Naive thymus-derived CD8-positive, alpha-beta T cell (primary cell): ENCODE measurements at regions of chr3 and their contacts with region 1.

Region 1: GRCh38 chr3:48446425-48447193 is at the start of gene ATRIP:
- DNase-seq: peak; percentile 78 to 91 (median 82)
- ATAC-seq: peak; percentile 95 to 98
- H3K4me3 Mint-ChIP-seq: peak within 1 kb of the TSS; percentile 86 to 98 (median 92)
- H3K27ac Mint-ChIP-seq: peak within 1 kb of the TSS; percentile 83 to 98 (median 95)
- H3K4me1 Mint-ChIP-seq: peaks cover 20 to 50% (median 42%) of the 10 kb centered on the region in 4 donors
- H3K27me3 Mint-ChIP-seq: no peaks in the 10 kb centered on the region
- polyA plus RNA-seq, gene ATRIP: 8.9 to 17.5 (median 13.1) TPM

Region 2: GRCh38 chr3:48465531-48466378 is 19.1 kb after region 1 on chr3:
- POLR2A ChIA-PET with region 1: interaction called, 25 read pairs
- DNase-seq: peak; percentile 63 to 82 (median 73)
- ATAC-seq: peak; percentile 97
- H3K4me3 Mint-ChIP-seq: peak overlapping the region; percentile 84 to 93 (median 90)
- H3K27ac Mint-ChIP-seq: peak overlapping the region; percentile 79 to 100 (median 96)
- H3K4me1 Mint-ChIP-seq: peaks cover 23 to 60% (median 59%) of the 10 kb centered on the region in 4 donors
- H3K27me3 Mint-ChIP-seq: no peaks in the 10 kb centered on the region

Region 3: GRCh38 chr3:48472915-48473616 is 26.5 kb after region 1 on chr3:
- POLR2A ChIA-PET with region 1: interaction called, 37 read pairs
- DNase-seq: peak; percentile 87 to 97 (median 94)
- ATAC-seq: peak; percentile 86 to 93
- H3K4me3 Mint-ChIP-seq: peak overlapping the region; percentile 84 to 100 (median 94)
- H3K27ac Mint-ChIP-seq: peak overlapping the region; percentile 95 to 100 (median 98)
- H3K4me1 Mint-ChIP-seq: peaks cover 26 to 76% (median 61%) of the 10 kb centered on the region in 4 donors
- H3K27me3 Mint-ChIP-seq: no peaks in the 10 kb centered on the region

Region 4: GRCh38 chr3:48478596-48479555 is 32.3 kb after region 1 on chr3:
- POLR2A ChIA-PET with region 1: interaction called, 37 read pairs
- DNase-seq: peak; percentile 35 to 88 (median 65)
- ATAC-seq: peak; percentile 88 to 89
- H3K4me3 Mint-ChIP-seq: peak overlapping the region; percentile 70 to 93 (median 88)
- H3K27ac Mint-ChIP-seq: peak overlapping the region; percentile 91 to 99 (median 97)
- H3K4me1 Mint-ChIP-seq: peaks cover 22 to 48% (median 43%) of the 10 kb centered on the region in 4 donors
- H3K27me3 Mint-ChIP-seq: no peaks in the 10 kb centered on the region